Activated CD4-positive, alpha-beta T cell treated with anti-CD3 and anti-CD28 coated beads for 36 hours (primary cell): ENCODE measurements at regions of chr9 and their contacts with region 1.

Region 1: DNA sequence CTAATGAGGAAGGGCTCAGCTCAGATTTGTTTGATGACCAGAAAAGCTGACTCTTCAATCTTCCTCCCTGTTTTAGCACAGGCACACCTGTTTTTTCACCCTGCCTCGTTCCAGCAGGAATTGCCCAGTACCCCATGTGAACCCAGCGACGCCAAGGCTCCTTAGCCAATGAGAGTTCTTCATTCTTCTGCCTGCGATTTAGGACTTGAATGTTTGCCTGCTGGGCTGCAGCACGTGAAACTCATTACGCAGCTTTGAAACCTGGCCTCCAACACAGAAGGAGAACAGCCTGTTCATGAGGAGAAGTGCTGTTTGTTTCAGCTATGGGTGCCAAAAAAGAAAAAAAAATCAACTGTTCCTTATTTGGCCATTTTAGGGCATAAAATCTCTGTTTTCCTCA is 315.5 kb downstream of the TRPM3 start:
- DNase-seq: no peak
- ATAC-seq: no peak
- H3K4me3 Mint-ChIP-seq: no peak overlapping the region
- H3K27ac Mint-ChIP-seq: no peak overlapping the region
- H3K4me1 Mint-ChIP-seq: no peaks in the 10 kb centered on the region
- H3K27me3 Mint-ChIP-seq: peaks cover 6% of the 10 kb centered on the region

Region 2: DNA sequence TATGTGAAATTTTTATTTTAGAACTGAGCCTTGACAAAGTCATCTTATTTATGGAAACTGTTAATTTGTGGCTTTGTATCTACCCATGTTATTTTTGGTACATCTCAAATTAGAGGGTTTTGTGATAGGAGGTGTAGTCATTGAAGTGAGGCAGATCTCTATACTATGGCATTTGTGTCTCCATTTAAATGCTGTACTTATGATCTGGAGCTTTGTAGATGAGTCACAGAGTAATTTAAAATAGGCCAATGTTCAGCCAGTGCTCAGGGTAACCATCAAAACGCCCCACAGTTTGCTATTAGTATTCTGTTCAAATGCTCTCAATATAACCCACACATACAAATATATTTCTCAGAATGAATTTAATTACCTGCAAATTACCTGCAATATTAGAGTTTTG is 40.0 kb before region 1 on chr9:
- CTCF ChIA-PET with region 1: no interaction called
- POLR2A ChIA-PET with region 1: no interaction called
- intact Hi-C with region 1: loop called in 1 of 2 experiments (anchors 5 kb)
- DNase-seq: no peak
- ATAC-seq: no peak
- H3K4me3 Mint-ChIP-seq: no peak overlapping the region
- H3K27ac Mint-ChIP-seq: no peak overlapping the region
- H3K4me1 Mint-ChIP-seq: no peaks in the 10 kb centered on the region
- H3K27me3 Mint-ChIP-seq: peaks cover 8% of the 10 kb centered on the region

Region 3: GRCh38 chr9:70911791-70912190 is 105.8 kb after region 1 on chr9:
- CTCF ChIA-PET with region 1: no interaction called
- POLR2A ChIA-PET with region 1: no interaction called
- intact Hi-C with region 1: no loop called
- DNase-seq: no peak
- ATAC-seq: no peak
- H3K4me3 Mint-ChIP-seq: no peak overlapping the region
- H3K27ac Mint-ChIP-seq: no peak overlapping the region
- H3K4me1 Mint-ChIP-seq: no peaks in the 10 kb centered on the region
- H3K27me3 Mint-ChIP-seq: peaks cover 3% of the 10 kb centered on the region